A549 (cell line): ENCODE measurements at regions of chr11 and their contacts with region 1.

Region 1: GRCh38 chr11:62678770-62679696 is at the start of gene UBXN1:
- DNase-seq: peak; percentile 87 to 92
- ATAC-seq: peak; percentile 84 to 86
- H3K4me3 ChIP-seq: peak within 1 kb of the TSS; percentile 67
- H3K27ac ChIP-seq: peak within 1 kb of the TSS; percentile 87 to 92
- H3K4me1 ChIP-seq: peaks cover 24% of the 10 kb centered on the region
- CTCF ChIP-seq: no peak
- EP300 ChIP-seq: no peak
- POLR2A ChIP-seq: peak; percentile 57
- RAD21 ChIP-seq: no peak
- polyA plus RNA-seq, gene UBXN1: 56.8 and 120 TPM in 2 replicates

Region 2: GRCh38 chr11:62705880-62706849 is 27.1 kb after region 1 on chr11:
- CTCF ChIA-PET with region 1: interaction called, 39 read pairs
- POLR2A ChIA-PET with region 1: interaction called, 5 read pairs
- DNase-seq: peak; percentile 87 to 90
- ATAC-seq: peak; percentile 73 to 87
- H3K4me3 ChIP-seq: peak overlapping the region; percentile 69
- H3K27ac ChIP-seq: peak overlapping the region; percentile 80 to 92
- H3K4me1 ChIP-seq: peaks cover 26% of the 10 kb centered on the region
- CTCF ChIP-seq: no peak
- EP300 ChIP-seq: no peak
- POLR2A ChIP-seq: peak; percentile 66
- RAD21 ChIP-seq: no peak

Region 3: GRCh38 chr11:62713343-62713742 is 34.3 kb after region 1 on chr11:
- CTCF ChIA-PET with region 1: interaction called, 22 read pairs
- POLR2A ChIA-PET with region 1: interaction called, 3 read pairs
- DNase-seq: peak; percentile 52 to 58
- ATAC-seq: peak in 1 of 2 experiments; percentile 15; a peak in 1 of 6 replicates
- H3K4me3 ChIP-seq: no peak overlapping the region
- H3K27ac ChIP-seq: peak overlapping the region; percentile 56 to 80
- H3K4me1 ChIP-seq: peaks cover 48% of the 10 kb centered on the region
- CTCF ChIP-seq: no peak
- EP300 ChIP-seq: no peak
- POLR2A ChIP-seq: no peak
- RAD21 ChIP-seq: no peak